Activated CD4-positive, alpha-beta T cell treated with anti-CD3 and anti-CD28 coated beads for 36 hours (primary cell): ENCODE measurements at regions of chr15 and their contacts with region 1.

Region 1: DNA sequence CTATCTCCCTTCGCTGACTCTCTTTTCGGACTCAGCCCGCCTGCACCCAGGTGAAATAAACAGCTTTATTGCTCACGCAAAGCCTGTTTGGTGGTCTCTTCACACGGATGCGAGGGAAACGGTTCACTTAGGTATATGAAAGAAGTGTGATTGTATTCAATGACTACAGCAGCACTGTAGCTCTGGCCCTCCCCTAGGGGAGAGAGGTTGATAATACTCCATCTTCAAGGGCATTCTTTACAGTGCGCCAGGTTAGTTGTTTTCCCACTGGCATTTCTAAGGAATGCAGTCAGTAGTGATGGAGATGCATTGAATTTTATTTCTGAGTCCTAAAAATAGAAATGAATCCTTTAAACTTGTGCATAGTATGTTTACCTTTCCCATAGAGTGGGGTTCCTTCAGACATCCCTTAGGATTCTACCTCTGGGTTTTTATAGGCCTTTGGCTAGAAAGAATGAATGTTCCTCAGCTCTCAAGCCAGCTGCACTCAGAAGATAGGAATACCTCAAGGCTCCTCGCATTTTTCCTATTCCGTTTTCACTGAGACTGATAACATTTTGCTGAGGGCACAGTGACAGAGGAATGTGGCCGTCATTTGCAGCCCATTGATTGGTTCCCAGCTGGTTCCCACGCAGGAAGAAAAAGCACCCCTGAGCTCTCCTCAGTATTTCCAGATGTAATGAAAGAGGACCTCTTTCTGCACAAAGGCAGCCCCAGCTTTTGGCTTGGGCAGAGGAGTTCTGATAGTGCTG is 131.8 kb upstream of the C2CD4B start:
- DNase-seq: no peak
- ATAC-seq: no peak
- H3K4me3 Mint-ChIP-seq: no peak overlapping the region
- H3K27ac Mint-ChIP-seq: no peak overlapping the region
- H3K4me1 Mint-ChIP-seq: no peaks in the 10 kb centered on the region
- H3K27me3 Mint-ChIP-seq: peaks cover 24% of the 10 kb centered on the region

Region 2: DNA sequence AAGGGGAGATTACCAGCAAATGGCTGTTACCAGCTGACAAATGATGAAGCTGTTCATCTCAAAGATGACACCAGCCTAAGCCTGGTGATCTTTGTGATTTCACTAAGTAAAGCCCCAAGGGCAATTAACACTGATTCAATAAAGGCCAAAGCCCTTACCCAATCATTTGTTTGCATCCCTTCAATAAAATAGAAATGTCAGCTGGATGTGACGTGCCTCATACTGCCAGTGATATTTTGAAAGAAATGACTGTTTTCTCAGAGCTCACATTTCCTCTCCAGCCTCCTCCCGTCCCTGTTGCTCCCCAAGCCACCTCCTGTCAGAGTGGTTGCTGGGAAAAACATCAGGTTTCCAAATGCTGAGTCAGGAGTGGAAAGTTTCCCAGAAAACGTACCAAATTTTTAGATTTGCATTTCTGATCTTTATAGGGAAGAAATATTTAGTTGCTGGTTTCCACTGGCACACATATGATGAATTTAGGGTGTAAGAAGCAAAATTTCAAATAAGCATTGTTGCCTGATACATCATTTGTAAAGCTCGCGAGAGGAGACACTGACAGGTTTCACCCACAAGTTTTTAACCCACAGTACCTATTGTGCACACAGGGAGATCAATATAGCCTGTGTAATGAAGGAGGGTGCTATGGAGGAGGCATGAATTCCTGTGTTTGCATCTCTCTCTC is 209.1 kb before region 1 on chr15:
- CTCF ChIA-PET with region 1: no interaction called
- POLR2A ChIA-PET with region 1: no interaction called
- intact Hi-C with region 1: no loop called
- DNase-seq: no peak
- ATAC-seq: peak; percentile 47
- H3K4me3 Mint-ChIP-seq: no peak overlapping the region
- H3K27ac Mint-ChIP-seq: no peak overlapping the region
- H3K4me1 Mint-ChIP-seq: no peaks in the 10 kb centered on the region
- H3K27me3 Mint-ChIP-seq: peaks cover 2% of the 10 kb centered on the region

Region 3: GRCh38 chr15:62277816-62278394 is 19.0 kb before region 1 on chr15:
- CTCF ChIA-PET with region 1: no interaction called
- POLR2A ChIA-PET with region 1: no interaction called
- intact Hi-C with region 1: no loop called
- DNase-seq: no peak
- ATAC-seq: no peak
- H3K4me3 Mint-ChIP-seq: no peak overlapping the region
- H3K27ac Mint-ChIP-seq: no peak overlapping the region
- H3K4me1 Mint-ChIP-seq: no peaks in the 10 kb centered on the region
- H3K27me3 Mint-ChIP-seq: peaks cover 24% of the 10 kb centered on the region

Region 4: GRCh38 chr15:62306851-62307504 is 10.0 kb after region 1 on chr15:
- CTCF ChIA-PET with region 1: interaction called, 10 read pairs
- POLR2A ChIA-PET with region 1: no interaction called
- intact Hi-C with region 1: no loop called
- DNase-seq: peak; percentile 33
- ATAC-seq: no peak
- H3K4me3 Mint-ChIP-seq: no peak overlapping the region
- H3K27ac Mint-ChIP-seq: no peak overlapping the region
- H3K4me1 Mint-ChIP-seq: peaks cover 5% of the 10 kb centered on the region
- H3K27me3 Mint-ChIP-seq: peaks cover 37% of the 10 kb centered on the region

Region 5: DNA sequence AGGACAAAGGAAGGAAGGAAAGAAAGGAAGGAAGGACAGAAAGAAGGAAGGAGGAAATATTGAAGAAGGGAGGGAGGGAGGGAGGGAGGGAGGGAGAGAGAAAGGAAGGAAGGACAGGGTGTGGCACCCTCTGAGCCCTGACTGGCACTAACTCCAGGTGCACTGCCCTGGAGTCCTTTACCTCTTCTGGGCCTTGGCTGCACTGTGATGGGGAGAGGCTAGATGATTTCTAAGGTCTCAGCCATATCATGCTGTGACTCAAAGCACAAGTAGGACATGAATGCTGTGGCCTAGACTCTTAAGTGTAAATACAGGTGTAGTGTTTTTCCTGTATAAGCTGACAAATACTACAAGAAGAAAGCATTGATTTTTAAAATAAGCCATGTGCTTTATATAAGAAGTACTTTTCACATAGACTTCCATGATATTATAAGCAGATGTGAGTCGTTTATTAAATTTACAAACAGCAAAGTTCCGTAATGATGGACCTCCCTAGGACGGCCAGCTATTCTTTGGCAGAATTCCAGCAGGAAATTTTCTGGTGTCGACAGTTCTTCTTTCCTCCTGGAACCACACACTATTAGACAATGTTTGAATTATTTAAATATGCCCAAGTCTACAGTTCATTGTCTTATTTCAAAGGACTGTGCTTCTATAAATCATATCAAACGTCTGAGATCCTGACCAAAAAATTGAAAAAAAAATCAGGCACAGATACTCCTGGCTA is 82.0 kb after region 1 on chr15:
- CTCF ChIA-PET with region 1: no interaction called
- POLR2A ChIA-PET with region 1: no interaction called
- intact Hi-C with region 1: no loop called
- DNase-seq: no peak
- ATAC-seq: no peak
- H3K4me3 Mint-ChIP-seq: no peak overlapping the region
- H3K27ac Mint-ChIP-seq: no peak overlapping the region
- H3K4me1 Mint-ChIP-seq: no peaks in the 10 kb centered on the region
- H3K27me3 Mint-ChIP-seq: peaks cover 19% of the 10 kb centered on the region